ENCODE measurements at regions of chr11 and their contacts with region 1.

Region 1: DNA sequence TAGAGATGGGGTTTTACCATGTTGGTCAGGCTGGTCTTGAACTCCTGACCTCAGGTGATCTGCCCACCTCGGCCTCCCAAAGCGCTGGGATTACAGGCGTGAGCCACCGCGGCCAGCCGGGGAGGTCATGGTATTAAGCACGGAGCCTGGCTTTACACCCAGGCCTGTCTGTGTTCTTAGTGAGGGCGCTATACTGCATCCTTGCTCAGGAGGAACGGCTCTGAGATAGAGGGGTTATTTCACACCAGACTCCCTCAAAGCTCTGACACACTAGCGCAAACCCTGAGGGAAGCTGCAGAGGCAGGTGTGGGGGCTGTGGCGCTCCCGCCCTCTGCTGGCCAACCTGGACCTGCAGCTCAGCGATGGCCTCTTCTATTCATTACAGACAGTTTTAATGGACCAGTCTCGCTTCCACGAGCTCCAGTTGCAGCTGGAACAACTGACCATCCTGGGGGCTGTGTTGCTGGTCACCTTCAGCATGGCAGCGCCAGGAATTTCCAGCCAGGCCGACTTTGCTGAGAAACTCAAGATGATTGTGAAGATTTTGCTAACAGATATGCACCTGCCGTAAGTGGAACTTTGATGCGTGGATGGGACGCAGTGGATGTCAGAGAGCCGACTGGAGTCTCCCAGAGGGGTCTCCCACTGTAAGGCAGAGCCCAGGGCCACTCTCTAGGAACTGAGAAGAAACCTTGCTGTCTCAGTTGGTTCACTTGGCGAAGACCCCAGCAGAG is 26.2 kb downstream of the TCP11L1 start:
- DNase-seq: peak in 1 of 2 donors; percentile 71
- H3K4me3 ChIP-seq: no peak overlapping the region
- H3K27ac ChIP-seq: no peak overlapping the region
- H3K4me1 ChIP-seq: peaks cover 44% of the 10 kb centered on the region
- H3K27me3 ChIP-seq: no peaks in the 10 kb centered on the region
- CTCF ChIP-seq: peak; percentile 35 to 75 (median 72)
- POLR2A ChIP-seq: no peak

Region 2: GRCh38 chr11:32960553-32961164 is 105.0 kb before region 1 on chr11:
- intact Hi-C with region 1: loop called (anchors 5 kb)
- DNase-seq: no peak
- H3K4me3 ChIP-seq: no peak overlapping the region
- H3K27ac ChIP-seq: no peak overlapping the region
- H3K4me1 ChIP-seq: no peaks in the 10 kb centered on the region
- H3K27me3 ChIP-seq: no peaks in the 10 kb centered on the region
- CTCF ChIP-seq: peak; percentile 51 to 64 (median 52)
- POLR2A ChIP-seq: no peak

Measured in vagina (tissue), 2 donors.